Thyroid gland (tissue), 4 donors: ENCODE measurements at regions of chr5 and their contacts with region 1.

Region 1: DNA sequence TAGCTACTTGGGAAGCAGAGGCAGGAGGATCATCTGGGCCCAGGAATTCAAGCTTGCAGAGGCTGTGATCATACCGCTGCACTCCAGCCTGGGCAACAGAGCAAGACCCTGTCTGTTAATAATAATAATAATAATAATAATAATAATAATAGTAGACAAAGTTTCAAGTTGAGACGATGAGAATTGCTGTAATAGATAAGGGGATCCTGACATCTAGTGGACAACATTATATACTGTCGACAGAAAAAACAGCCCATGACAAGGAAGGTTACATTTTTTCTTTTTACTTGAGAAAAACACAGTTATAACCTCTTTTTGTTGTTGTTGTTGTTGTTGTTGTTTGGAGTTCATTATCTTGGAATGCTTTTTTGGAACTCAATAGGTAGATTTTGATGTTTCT is 35.3 kb downstream of the NDFIP1 start:
- DNase-seq: no peak
- H3K4me3 ChIP-seq: no peak overlapping the region
- H3K27ac ChIP-seq: no peak overlapping the region
- H3K4me1 ChIP-seq: no peaks in the 10 kb centered on the region
- H3K27me3 ChIP-seq: no peaks in the 10 kb centered on the region
- CTCF ChIP-seq: peak; percentile 14 to 62 (median 36)
- POLR2A ChIP-seq: no peak

Region 2: DNA sequence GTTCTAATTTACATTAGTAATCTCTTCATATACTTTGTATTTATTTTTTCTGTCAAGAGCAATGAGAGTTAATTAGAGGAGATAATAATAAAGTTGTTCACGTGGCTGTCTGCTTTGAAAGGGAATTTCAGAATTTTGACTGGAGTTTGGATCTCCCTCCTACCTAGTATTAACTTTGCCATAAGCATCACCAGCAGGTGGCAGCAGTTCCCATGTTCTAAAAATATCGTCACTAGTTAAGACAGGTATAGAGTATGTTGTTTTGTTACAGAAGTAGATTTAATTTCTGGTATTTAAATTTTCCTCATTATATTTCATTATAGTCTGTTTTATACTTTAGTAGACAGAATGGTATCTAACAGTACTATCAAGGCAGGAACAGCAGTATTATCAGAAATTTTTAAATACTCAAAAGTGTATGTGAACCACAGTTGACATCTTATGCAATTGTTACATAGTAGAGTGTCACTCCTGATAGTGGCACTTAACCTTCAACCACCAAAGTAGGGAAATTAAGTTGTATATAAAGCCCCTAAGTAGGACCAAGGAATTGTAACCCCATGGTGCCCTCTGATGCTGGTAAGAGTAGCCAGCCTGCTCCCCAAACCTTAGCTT is 151.4 kb before region 1 on chr5:
- intact Hi-C with region 1: loop called (anchors 5 kb)
- DNase-seq: peak; percentile 82 to 87
- H3K4me3 ChIP-seq: no peak overlapping the region
- H3K27ac ChIP-seq: no peak overlapping the region
- H3K4me1 ChIP-seq: peaks cover 7 to 15% of the 10 kb centered on the region in 2 donors
- H3K27me3 ChIP-seq: no peaks in the 10 kb centered on the region
- CTCF ChIP-seq: peak; percentile 49 to 79 (median 71)
- POLR2A ChIP-seq: no peak

Region 3: DNA sequence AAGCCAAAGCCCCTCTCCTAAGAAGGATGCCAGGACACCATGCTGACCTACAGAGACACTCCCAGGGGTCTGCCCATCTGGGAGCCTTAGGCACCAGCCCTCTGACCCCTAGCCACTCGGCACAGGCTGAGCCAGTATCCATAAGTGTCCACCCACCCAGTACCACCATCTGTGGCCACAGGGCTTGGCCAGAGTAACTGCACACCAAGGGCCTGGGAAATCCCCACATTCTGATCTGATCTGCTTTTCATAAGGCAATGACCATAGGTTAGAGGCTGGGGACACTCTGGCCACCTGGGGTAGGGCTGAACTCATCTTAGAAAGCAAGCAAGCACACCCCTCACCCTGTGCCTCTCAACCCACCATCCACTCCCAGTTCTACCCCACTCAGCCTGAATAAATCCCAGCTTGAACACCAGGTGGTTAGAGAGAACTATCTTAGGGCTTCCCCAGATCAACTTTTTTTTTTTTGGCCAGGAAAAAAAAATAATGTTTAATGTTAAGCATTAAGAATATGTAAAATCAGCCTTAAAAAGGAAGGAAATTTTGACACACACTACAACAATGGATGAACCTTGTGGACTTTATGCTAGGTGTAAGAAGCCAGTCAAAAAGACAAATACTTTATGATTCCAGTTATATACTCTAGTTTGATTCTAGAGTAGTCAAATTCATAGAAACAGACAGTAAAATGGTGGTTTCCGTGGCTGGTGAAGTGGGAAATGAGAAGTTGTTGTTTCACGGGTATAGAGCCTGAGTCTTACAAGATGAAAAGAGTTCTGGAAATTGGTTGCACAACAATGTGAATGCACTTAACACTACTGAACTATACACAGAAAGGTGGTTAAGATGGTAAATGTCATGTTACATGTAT is 137.3 kb before region 1 on chr5:
- intact Hi-C with region 1: loop called (anchors 5 kb)
- DNase-seq: no peak
- H3K4me3 ChIP-seq: no peak overlapping the region
- H3K27ac ChIP-seq: no peak overlapping the region
- H3K4me1 ChIP-seq: peaks cover under 1% of the 10 kb centered on the region in 2 donors
- H3K27me3 ChIP-seq: no peaks in the 10 kb centered on the region
- CTCF ChIP-seq: no peak
- POLR2A ChIP-seq: no peak

Region 4: GRCh38 chr5:142486581-142486980 is 342.7 kb after region 1 on chr5:
- intact Hi-C with region 1: no loop called
- DNase-seq: no peak
- H3K4me3 ChIP-seq: no peak overlapping the region
- H3K27ac ChIP-seq: no peak overlapping the region
- H3K4me1 ChIP-seq: no peaks in the 10 kb centered on the region
- H3K27me3 ChIP-seq: no peaks in the 10 kb centered on the region
- CTCF ChIP-seq: no peak
- POLR2A ChIP-seq: no peak